ENCODE measurements at regions of chrX and their contacts with region 1.

Region 1: GRCh38 chrX:68345025-68345424 is 88.3 kb downstream of the OPHN1 start:
- DNase-seq: peak; percentile 10
- H3K4me3 ChIP-seq: no peak overlapping the region
- H3K27ac ChIP-seq: no peak overlapping the region
- H3K27me3 ChIP-seq: no peaks in the 10 kb centered on the region
- CTCF ChIP-seq: no peak

Region 2: DNA sequence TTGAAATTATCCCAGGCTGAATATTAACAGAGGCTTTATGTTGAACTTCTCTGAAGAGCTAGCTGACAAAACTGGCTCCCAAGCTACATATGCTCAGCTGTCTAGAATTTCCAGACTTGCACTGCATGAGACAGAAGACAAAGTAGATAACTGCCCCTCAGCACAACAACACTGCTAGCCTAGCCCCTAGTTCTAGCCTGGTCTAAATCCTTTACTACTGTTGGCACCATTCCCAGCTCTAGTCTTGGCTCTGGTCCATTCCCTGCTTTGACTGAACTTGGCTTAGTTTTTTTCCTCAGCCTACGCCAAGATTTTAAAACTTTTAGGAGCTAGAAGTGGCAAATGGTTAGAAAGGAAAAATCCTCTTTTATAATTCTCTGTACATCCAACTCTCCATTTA is 95.9 kb after region 1 on chrX:
- CTCF ChIA-PET with region 1: interaction called, 3 read pairs
- POLR2A ChIA-PET with region 1: interaction called, 10 read pairs
- DNase-seq: no peak
- H3K4me3 ChIP-seq: no peak overlapping the region
- H3K27ac ChIP-seq: no peak overlapping the region
- H3K27me3 ChIP-seq: no peaks in the 10 kb centered on the region
- CTCF ChIP-seq: no peak